Posterior cingulate gyrus (tissue), 11 donors: ENCODE measurements at regions of chr3 and their contacts with region 1.

Region 1: DNA sequence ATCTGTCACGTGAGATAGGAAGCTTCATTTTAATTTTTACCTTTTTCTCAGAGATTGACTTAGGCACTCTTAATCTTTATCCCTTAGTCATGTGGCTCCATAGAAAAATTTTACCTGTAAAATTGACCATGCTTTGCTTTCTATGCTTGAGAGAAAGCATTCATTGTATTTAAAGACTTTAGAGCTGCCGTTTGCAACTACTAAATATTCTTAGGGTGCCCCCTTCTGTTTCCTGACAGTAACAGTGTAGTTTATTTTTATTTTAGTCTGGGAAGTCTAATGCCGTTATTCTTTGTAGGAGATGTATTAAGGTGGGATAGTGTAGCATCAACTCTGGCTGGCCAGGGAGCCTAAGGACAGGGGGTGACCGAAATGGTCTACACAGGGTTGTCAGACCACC is 84.5 kb upstream of the SYNPR start:
- DNase-seq: no peak

Region 2: GRCh38 chr3:62622553-62623193 is 571.0 kb before region 1 on chr3:
- intact Hi-C with region 1: loop called (anchors 5 kb)
- DNase-seq: peak in 1 of 10 donors; percentile 28

Region 3: GRCh38 chr3:62665598-62666437 is 527.8 kb before region 1 on chr3:
- intact Hi-C with region 1: loop called (anchors 2 kb)
- DNase-seq: peak; percentile 66 to 96 (median 78)

Region 4: GRCh38 chr3:62873761-62874647 is 319.6 kb before region 1 on chr3:
- intact Hi-C with region 1: loop called (anchors 5 kb)
- DNase-seq: peak; percentile 23 to 96 (median 72)